ENCODE measurements at regions of chr20 and their contacts with region 1.

Region 1: DNA sequence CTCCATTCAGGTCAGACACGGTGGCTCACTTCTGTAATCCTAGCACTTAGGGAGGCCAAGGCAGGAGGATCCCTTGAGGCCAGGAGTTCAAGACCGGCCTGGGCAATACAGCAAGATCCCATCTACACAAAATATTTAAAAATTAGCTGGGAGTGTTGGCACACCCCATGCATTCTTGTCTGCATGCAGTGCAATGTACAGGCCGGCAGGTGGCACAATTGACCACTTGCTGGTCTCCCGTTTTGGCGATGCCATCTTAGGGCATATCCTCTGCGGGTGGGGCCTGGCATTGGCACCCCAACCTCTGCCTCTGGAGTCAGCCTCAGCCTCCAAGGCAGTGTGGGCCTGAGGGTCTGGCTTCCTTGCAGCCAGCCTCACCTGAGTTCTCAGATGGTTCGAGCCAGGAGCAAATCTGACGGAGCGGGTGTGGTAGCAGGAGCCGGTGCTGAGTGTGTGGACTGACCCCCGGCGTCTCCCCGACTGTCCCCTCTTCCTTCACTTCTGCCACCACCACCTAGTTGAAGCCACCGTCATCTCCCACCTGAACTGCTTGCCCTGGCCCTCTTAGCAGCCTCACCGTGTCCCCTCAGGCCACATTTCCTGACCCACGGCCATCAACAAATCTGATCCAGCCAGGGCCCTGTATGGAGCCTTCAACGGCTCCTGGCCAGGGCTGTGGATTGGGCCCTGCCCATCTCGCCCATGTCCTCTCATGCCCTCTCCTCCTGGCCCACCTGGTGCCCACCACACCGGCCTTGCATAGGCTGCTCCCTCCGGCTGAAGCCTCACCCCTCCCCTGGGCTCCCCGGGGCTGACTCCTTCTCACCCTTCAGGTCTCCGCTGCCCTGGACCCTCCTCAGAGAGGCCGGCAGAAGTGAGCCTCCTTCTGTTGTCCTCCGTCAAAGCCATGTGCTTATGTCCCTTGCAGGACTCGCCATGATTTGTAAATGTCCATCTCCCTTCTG is 44.0 kb downstream of the EFCAB8 start:
- DNase-seq: peak; percentile 51 to 73 (median 66)
- ATAC-seq: peak; percentile 84
- H3K4me3 ChIP-seq: no peak overlapping the region
- H3K27ac ChIP-seq: no peak overlapping the region
- H3K4me1 ChIP-seq: peaks cover 0 to 9% of the 10 kb centered on the region in 2 experiments; a peak in 2 of 5 replicates
- H3K27me3 ChIP-seq: peaks cover 14 to 32% of the 10 kb centered on the region in 2 experiments; a peak in 4 of 5 replicates
- CTCF ChIP-seq: peak; percentile 91 to 94 (median 93)
- EP300 ChIP-seq: no peak
- POLR2A ChIP-seq: no peak
- RAD21 ChIP-seq: peak; percentile 76 to 91

Region 2: GRCh38 chr20:32888636-32889035 is 14.1 kb before region 1 on chr20:
- CTCF ChIA-PET with region 1: no interaction called
- POLR2A ChIA-PET with region 1: no interaction called
- in situ Hi-C with region 1: no loop called
- intact Hi-C with region 1: no loop called
- DNase-seq: no peak
- ATAC-seq: no peak
- H3K4me3 ChIP-seq: no peak overlapping the region
- H3K27ac ChIP-seq: no peak overlapping the region
- H3K4me1 ChIP-seq: 0 out of 5 replicates have a peak, but pooled peaks cover 0 to 1% of the 10 kb centered on the region in 2 experiments
- H3K27me3 ChIP-seq: peaks cover 11 to 57% of the 10 kb centered on the region in 2 experiments; a peak in 4 of 5 replicates
- CTCF ChIP-seq: no peak
- EP300 ChIP-seq: no peak
- POLR2A ChIP-seq: no peak
- RAD21 ChIP-seq: no peak

Region 3: GRCh38 chr20:32945710-32946221 is 43.0 kb after region 1 on chr20:
- CTCF ChIA-PET with region 1: interaction called, 6 read pairs
- POLR2A ChIA-PET with region 1: no interaction called
- in situ Hi-C with region 1: loop called (anchors 5 kb)
- intact Hi-C with region 1: loop called (anchors 1 kb)
- DNase-seq: peak in 2 of 4 experiments; percentile 14 to 46
- ATAC-seq: peak; percentile 84
- H3K4me3 ChIP-seq: no peak overlapping the region
- H3K27ac ChIP-seq: no peak overlapping the region
- H3K4me1 ChIP-seq: no peaks in the 10 kb centered on the region
- H3K27me3 ChIP-seq: peaks cover 0 to 11% of the 10 kb centered on the region in 2 experiments; a peak in 2 of 5 replicates
- CTCF ChIP-seq: peak; percentile 53 to 57 (median 57); a peak in 5 of 6 replicates
- EP300 ChIP-seq: no peak
- POLR2A ChIP-seq: no peak
- RAD21 ChIP-seq: peak in 1 of 2 experiments; percentile 56; a peak in 2 of 4 replicates

Region 4: GRCh38 chr20:32959351-32960221 is 56.8 kb after region 1 on chr20:
- CTCF ChIA-PET with region 1: no interaction called
- POLR2A ChIA-PET with region 1: no interaction called
- in situ Hi-C with region 1: no loop called
- intact Hi-C with region 1: loop called (anchors 1 kb)
- DNase-seq: peak; percentile 28 to 66 (median 46)
- ATAC-seq: peak; percentile 95
- H3K4me3 ChIP-seq: no peak overlapping the region
- H3K27ac ChIP-seq: no peak overlapping the region
- H3K4me1 ChIP-seq: peaks cover 0 to 7% of the 10 kb centered on the region in 2 experiments; a peak in 1 of 5 replicates
- H3K27me3 ChIP-seq: peaks cover 11 to 29% of the 10 kb centered on the region in 2 experiments; a peak in 4 of 5 replicates
- CTCF ChIP-seq: peak; percentile 68 to 79 (median 72)
- EP300 ChIP-seq: no peak
- POLR2A ChIP-seq: no peak
- RAD21 ChIP-seq: no peak

Region 5: GRCh38 chr20:33005132-33005566 is 102.4 kb after region 1 on chr20:
- CTCF ChIA-PET with region 1: interaction called, 6 read pairs
- POLR2A ChIA-PET with region 1: no interaction called
- in situ Hi-C with region 1: no loop called
- intact Hi-C with region 1: loop called (anchors 2 kb)
- DNase-seq: peak; percentile 53 to 75 (median 62)
- ATAC-seq: peak; percentile 69; the same call in 2 of the 3 replicates
- H3K4me3 ChIP-seq: no peak overlapping the region
- H3K27ac ChIP-seq: no peak overlapping the region
- H3K4me1 ChIP-seq: no peaks in the 10 kb centered on the region; a peak in 1 of 5 replicates
- H3K27me3 ChIP-seq: peaks cover 5 to 45% of the 10 kb centered on the region in 2 experiments; a peak in 3 of 5 replicates
- CTCF ChIP-seq: peak; percentile 53 to 70 (median 63)
- EP300 ChIP-seq: no peak
- POLR2A ChIP-seq: no peak
- RAD21 ChIP-seq: peak; percentile 17 to 64; a peak in 2 of 4 replicates

Region 6: DNA sequence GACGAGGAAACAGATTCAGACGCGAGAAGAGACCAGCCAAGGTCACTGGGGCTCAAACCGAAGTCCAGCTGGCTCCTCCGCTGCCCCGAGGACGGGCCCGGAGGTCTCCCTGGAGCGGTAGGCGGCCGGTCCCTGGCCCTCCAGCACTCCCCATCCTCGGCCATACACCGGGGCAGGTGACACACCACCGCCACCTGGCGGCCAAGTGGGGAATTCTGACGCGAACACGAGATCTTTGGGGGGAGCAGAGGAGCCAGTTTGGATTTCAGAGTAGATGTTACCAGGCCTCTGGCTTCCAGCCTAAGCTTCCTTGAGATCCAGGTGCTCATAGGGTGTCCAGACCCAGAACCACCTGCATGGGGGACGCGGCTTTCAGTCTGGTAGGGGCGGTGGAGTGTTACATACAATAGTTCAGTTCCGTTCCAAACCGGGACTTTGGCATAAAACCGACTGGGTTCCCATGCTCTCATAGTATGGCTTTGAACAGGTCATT is 396.4 kb after region 1 on chr20:
- CTCF ChIA-PET with region 1: interaction called, 4 read pairs
- POLR2A ChIA-PET with region 1: no interaction called
- in situ Hi-C with region 1: no loop called
- intact Hi-C with region 1: loop called (anchors 5 kb)
- DNase-seq: peak; percentile 82 to 90 (median 86)
- ATAC-seq: peak; percentile 98
- H3K4me3 ChIP-seq: no peak overlapping the region
- H3K27ac ChIP-seq: no peak overlapping the region
- H3K4me1 ChIP-seq: peaks cover 0 to 3% of the 10 kb centered on the region in 2 experiments; a peak in 1 of 5 replicates
- H3K27me3 ChIP-seq: peaks cover 12 to 46% of the 10 kb centered on the region in 2 experiments
- CTCF ChIP-seq: peak; percentile 89 to 97 (median 93)
- EP300 ChIP-seq: no peak
- POLR2A ChIP-seq: no peak
- RAD21 ChIP-seq: peak; percentile 52 to 83; a peak in 3 of 4 replicates